Posterior vena cava (tissue), 2 donors: ENCODE measurements at regions of chr14 and their contacts with region 1.

Region 1: DNA sequence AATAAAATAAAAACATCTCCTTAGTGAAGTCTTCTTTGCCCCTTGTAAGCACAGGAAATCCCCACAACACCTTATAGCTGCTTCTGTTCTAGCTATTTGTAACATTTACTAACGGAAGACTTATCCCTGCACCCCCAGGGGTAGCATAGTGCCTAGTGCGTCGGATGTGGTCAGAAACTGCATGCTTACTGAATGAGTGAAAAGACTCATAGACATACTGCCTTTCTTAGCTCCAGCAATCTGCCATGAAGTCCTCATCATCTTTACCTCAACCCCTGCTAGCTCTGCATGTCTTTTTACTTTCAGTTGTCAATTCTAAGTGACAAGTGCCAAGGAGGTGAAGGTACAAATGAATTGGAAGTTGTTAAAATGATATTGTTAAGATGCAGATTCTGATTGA is 12.9 kb downstream of the RIOX1 start:
- DNase-seq: no peak

Region 2: DNA sequence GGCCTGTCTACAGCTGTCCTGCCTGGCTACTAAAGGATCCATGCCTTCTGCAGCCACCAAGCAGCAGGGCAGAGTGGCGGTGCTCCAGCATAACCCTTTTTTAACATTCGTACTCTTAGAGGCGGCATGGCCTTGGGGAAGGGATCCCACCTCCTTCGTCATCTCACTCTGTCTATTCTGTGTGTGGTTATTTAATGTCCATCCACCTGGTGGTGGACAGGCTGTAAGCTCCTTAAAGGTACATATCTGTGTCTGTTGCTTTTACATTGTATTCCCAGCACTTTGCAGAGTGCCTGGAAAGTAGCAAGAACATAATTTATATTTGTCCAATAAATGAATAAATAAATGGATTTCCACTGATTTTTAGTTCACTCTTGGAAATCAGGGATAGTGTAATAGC is 17.6 kb after region 1 on chr14:
- intact Hi-C with region 1: loop called in 1 of 2 experiments (anchors 1 kb)
- DNase-seq: no peak

Region 3: GRCh38 chr14:73576391-73576790 is 72.7 kb after region 1 on chr14:
- intact Hi-C with region 1: loop called in 1 of 2 experiments (anchors 10 kb)
- DNase-seq: no peak

Region 4: GRCh38 chr14:73633116-73634010 is 129.7 kb after region 1 on chr14:
- intact Hi-C with region 1: loop called (anchors 5 kb)
- DNase-seq: peak; percentile 81

Region 5: DNA sequence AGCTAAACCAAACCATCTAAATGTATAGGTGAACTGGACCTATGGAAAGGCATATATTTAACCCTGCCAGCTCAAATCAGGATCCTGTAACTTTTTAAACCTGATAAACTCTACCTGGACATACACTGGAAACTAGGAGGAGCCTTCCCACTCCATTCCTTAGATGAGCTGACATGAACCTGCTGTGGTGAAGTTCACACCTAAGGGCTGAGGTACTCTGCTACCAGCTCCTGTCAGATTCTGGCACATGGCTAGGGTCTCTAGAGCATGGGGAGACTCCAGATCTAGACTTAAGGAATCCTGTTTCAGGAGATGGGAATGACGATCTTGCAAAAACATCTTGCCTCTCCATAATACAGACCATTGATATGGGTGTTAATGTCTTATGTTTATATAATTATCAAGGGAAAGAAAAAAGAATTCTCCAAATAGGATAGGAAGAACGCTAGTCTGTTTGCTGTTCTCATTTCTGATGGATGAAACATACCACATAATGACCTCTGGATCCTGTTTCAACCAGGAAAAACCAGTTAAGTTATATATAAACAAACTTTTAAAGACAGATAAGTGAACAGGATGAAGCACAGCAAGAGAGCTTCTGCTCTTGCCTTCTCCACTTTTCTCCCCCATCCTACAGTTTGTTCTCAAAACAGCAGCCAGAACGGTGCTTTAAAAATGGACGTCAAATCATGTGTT is 474.1 kb after region 1 on chr14:
- intact Hi-C with region 1: no loop called
- DNase-seq: no peak